Tibial artery (tissue), 4 donors: ENCODE measurements at regions of chr5 and their contacts with region 1.

Region 1: GRCh38 chr5:157366741-157367674 is 93.0 kb upstream of the NIPAL4 start:
- DNase-seq: peak in 1 of 2 donors; percentile 46
- H3K4me3 ChIP-seq: no peak overlapping the region
- H3K27ac ChIP-seq: peak overlapping the region in 1 of 2 donors; percentile 58
- H3K4me1 ChIP-seq: peaks cover 0 to 34% (median 3%) of the 10 kb centered on the region in 4 donors
- H3K27me3 ChIP-seq: no peaks in the 10 kb centered on the region
- CTCF ChIP-seq: peak; percentile 71 to 76

Region 2: DNA sequence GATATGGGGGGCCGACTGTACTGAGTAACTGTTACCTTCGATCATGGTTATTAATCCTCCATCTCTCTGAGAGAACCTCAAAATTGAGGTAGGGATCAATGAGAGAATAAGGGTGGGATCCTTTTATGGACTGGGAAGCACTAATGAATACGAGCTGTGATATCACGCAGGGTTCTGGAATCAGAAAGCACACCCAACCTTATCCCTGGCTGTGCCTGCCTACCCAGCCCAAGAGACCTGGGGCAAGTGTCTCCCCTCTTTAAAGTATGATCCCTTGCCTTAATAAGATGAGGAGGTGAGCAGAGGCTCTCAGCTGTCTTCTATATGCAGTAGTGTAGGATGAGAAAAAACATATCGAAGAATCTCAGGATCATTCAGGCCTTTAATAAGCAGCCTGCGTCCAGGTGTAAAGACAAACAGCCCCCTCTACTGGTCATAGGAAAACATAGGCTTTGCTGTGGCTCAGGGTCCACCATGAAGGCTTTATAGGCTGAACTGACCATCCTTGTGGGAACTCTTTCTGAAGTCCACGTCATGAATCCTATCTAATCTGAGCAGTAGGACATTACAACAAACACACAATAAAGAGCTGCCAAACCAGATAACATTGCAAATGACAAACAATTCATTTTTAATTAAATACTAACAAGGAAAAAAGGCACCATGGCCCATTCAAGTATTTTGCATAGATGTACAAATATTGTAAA is 109.8 kb after region 1 on chr5:
- intact Hi-C with region 1: loop called (anchors 5 kb)
- DNase-seq: no peak
- H3K4me3 ChIP-seq: no peak overlapping the region
- H3K27ac ChIP-seq: no peak overlapping the region
- H3K4me1 ChIP-seq: peaks cover 0 to 42% (median 11%) of the 10 kb centered on the region in 4 donors
- H3K27me3 ChIP-seq: no peaks in the 10 kb centered on the region
- CTCF ChIP-seq: peak; percentile 73

Region 3: DNA sequence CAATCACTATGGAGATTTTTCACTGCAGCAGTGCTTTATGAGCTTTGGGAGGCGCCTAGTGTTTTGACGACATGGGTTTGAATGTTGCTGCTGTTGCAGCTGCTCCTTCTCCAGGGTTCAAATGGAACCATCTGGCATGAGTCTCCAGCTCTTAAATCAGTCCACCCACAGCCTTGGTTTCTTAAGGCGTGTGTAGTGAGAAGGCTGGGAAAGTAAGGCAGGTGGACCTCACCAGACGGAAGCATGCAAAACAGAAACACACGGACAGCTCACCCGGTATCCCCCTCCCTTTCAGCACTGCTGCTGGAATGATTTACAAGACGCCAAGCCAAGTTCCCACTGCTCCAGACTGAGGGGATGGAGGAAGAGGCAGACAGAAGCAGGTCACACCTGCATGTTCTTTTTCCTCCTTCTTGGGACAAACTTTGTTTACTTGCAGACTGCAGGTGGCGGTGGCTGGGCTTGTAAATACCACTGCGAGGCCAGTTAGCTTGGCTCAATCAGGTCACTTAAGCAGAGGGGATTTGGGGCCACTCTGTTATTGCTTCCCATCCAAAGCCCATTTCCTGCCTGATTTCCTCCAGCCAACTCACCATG is 161.1 kb after region 1 on chr5:
- intact Hi-C with region 1: no loop called
- DNase-seq: peak in 1 of 2 donors; percentile 44
- H3K4me3 ChIP-seq: no peak overlapping the region
- H3K27ac ChIP-seq: no peak overlapping the region
- H3K4me1 ChIP-seq: peaks cover 0 to 34% (median 10%) of the 10 kb centered on the region in 4 donors
- H3K27me3 ChIP-seq: no peaks in the 10 kb centered on the region
- CTCF ChIP-seq: no peak